ENCODE measurements at regions of chr19 and their contacts with region 1.

Region 1: GRCh38 chr19:28466107-28467045 is 746.6 kb downstream of the UQCRFS1 start:
- DNase-seq: no peak
- ATAC-seq: no peak

Region 2: DNA sequence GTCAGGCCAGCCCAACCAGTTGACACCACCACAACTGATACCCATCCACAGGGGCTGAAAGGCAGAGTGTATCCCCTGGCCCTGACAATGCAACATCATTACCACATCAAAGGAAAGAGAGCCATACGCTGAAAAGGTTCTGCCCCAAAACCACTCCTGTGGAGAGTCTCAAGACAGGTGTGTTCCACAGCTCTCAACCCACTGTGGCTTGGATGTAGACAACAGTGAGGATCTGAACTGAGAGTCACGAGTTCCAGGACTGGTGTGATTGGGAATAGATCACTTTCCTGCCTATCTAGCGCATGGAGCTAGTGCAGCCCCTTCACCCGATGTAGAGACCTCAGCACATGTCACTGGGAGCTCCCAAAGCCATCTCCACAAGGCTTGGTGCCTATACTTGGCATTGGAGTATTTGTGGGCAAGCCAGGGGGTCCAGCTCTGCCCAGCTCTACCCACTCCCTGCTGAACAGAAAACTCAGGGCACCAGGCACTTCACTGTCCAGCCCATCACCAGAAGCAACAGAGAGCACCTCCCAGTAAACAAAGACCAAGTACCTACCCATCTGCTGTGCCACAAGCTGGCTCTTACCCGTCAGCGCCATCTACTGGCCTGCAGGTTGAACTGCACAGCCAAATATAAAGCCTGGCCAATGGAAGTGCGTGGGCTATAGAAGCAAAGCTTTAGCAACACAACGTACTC is 167.1 kb after region 1 on chr19:
- intact Hi-C with region 1: loop called (anchors 5 kb)
- DNase-seq: no peak
- ATAC-seq: no peak

Region 3: DNA sequence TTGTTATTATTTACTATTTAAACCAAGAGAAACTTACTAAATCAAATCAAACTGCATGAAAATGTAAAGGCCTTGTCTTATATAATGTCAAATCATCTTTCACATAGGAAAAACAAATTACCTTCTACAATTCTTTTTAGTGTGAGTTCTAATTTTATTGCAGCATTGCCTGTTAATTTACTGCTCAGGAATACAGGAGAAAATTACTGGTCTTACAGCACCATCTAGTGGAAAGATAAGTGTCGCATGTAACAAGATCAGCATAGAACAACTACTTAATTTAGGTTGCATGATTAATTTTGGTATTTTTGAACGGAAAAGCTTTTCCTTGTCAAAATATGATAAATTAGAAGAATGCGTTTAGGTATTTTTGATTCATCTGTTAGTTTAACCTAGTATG is 243.9 kb after region 1 on chr19:
- intact Hi-C with region 1: loop called (anchors 1 kb)
- DNase-seq: no peak
- ATAC-seq: no peak

Measured in Right ventricle myocardium inferior (tissue), 1 donor.